Activated CD4-positive, alpha-beta T cell treated with anti-CD3 and anti-CD28 coated beads for 36 hours (primary cell): ENCODE measurements at regions of chr4 and their contacts with region 1.

Region 1: DNA sequence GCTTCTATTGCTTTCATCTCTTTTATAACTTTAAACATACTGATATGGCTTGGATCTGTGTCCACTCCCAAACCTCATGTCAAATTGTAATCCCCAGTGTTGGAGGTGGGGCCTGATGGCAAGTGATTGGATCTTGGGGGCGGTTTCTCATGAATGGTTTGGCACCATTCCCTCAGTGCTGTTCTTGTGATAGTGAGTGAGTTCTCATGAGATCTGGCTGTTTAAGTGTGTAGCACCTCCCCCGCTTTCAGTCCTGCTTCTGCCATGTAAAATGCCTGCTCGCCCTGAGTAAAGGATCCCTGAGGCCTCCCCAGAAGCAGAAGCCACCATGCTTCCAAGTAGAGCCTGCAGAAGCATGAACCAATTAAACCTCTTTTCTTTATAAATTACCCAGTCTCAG is 17.7 kb downstream of the MND1 start:
- DNase-seq: no peak
- ATAC-seq: no peak
- H3K4me3 Mint-ChIP-seq: no peak overlapping the region
- H3K27ac Mint-ChIP-seq: no peak overlapping the region
- H3K4me1 Mint-ChIP-seq: peaks cover 10% of the 10 kb centered on the region
- H3K27me3 Mint-ChIP-seq: no peaks in the 10 kb centered on the region

Region 2: DNA sequence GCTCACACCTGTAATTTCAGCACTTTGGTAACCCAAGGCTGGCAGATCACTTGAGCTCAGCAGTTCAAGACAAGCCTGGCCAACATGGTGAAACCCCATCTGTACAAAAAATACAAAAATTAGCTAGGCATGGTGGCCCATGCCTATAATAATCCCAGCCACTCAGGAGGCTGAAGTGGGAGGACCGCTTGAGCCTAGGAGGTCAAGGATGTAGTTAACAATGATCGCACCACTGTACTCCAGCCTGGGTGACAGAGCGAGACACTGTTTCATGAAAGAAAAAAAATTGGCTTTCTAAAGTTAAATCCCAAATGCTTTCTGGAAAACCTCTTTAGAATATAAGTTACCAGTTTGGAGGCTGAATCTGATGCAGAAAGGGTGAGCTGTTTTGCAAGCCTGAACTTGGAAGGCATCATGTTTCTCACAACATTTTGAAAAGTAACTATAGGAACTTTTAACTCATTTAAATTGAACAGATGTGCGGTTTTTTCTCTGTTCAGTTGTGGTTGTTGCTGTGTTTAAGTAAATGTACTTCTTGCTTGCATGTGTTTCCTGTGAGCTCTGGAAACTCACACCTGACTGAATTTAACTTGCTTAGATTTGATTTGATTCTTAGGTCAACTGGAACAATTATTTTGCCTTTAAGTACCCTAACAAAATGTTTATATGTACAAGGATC is 64.2 kb after region 1 on chr4:
- CTCF ChIA-PET with region 1: no interaction called
- POLR2A ChIA-PET with region 1: no interaction called
- intact Hi-C with region 1: loop called in 1 of 2 experiments (anchors 2 kb)
- DNase-seq: no peak
- ATAC-seq: peak; percentile 56
- H3K4me3 Mint-ChIP-seq: no peak overlapping the region
- H3K27ac Mint-ChIP-seq: no peak overlapping the region
- H3K4me1 Mint-ChIP-seq: peaks cover 61% of the 10 kb centered on the region
- H3K27me3 Mint-ChIP-seq: no peaks in the 10 kb centered on the region